ENCODE measurements at regions of chr5 and their contacts with region 1.

Region 1: DNA sequence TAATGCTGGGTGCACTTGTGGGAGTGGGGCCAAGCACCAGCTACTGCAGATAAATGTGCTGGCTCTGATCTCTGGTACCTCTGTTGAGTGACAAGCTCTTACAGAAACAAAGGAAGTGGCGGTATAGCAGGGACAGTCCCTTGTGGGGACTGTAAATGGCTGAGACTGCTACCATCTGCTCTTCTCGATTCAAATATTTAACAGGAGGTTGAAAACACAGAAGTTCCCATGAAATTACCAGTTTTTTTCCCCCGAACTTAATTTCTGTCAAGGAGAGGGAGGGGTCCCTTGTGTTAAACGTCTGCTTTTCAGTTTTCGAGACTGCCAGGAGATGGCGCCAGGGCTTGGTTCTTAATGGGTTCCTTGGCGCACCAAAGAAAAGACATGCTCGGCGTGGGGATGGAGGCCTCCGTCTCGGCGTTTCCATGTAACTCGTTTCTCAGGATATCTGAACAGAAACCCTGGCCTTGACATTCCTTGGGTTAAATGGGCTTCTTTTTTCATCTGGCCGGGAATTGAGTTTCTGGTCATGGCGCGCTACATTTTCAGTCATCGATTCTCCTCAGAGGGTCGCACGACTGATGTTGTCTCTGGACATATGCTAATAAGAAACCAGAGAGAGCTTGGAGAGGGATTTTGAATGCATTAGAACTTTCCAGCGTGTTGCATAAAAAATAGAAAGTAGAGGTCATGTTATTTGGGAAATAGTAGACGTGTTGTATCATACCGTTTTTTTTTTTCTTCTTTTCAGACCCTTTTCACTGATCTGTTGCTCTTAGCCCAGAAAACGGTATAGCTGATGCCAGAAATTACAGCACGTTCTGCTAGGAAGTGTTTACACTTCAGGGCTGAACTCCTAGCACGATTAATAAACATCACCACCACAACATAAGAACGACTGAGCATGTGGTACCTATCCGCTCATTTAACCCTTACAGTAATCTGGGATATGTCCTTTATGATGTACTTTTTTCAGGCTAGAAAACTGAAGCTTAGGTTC is 64.0 kb downstream of the CARTPT start:
- DNase-seq: peak; percentile 89 to 94
- ATAC-seq: peak; percentile 89
- H3K4me3 ChIP-seq: peak overlapping the region in 1 of 2 donors; percentile 80
- H3K27ac ChIP-seq: peak overlapping the region; percentile 91 to 97
- H3K4me1 ChIP-seq: peaks cover 3 to 9% of the 10 kb centered on the region in 2 donors
- H3K27me3 ChIP-seq: no peaks in the 10 kb centered on the region

Region 2: GRCh38 chr5:71679714-71680113 is 103.4 kb before region 1 on chr5:
- intact Hi-C with region 1: no loop called
- DNase-seq: no peak
- ATAC-seq: no peak
- H3K4me3 ChIP-seq: no peak overlapping the region
- H3K27ac ChIP-seq: no peak overlapping the region
- H3K4me1 ChIP-seq: no peaks in the 10 kb centered on the region
- H3K27me3 ChIP-seq: no peaks in the 10 kb centered on the region

Region 3: DNA sequence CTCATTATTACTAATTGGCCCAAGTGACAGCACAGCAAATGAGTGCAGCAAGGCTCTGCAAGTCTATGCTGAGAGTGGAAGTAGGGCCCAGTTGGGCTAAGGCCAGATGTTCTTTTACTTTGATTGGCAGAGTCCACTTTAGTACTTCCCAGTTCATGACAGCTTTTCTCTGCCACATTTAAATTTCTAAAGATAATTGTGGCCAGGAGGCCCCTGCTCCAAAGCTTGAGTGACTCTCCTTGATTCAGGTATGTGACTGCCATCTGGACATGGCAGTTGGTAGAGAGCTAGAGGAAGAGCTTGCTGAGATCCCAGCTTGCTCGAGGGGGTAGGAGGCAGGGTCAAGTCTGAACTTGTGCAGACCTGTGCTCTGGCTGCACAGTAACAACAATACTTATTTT is 90.1 kb after region 1 on chr5:
- intact Hi-C with region 1: loop called in 1 of 2 experiments (anchors 10 kb)
- DNase-seq: no peak
- ATAC-seq: no peak
- H3K4me3 ChIP-seq: no peak overlapping the region
- H3K27ac ChIP-seq: no peak overlapping the region
- H3K4me1 ChIP-seq: no peaks in the 10 kb centered on the region
- H3K27me3 ChIP-seq: no peaks in the 10 kb centered on the region

Region 4: GRCh38 chr5:71932655-71933338 is 149.7 kb after region 1 on chr5:
- intact Hi-C with region 1: loop called (anchors 2 to 5 kb)
- DNase-seq: peak; percentile 92 to 93
- ATAC-seq: peak; percentile 86
- H3K4me3 ChIP-seq: no peak overlapping the region
- H3K27ac ChIP-seq: peak overlapping the region; percentile 91 to 99
- H3K4me1 ChIP-seq: no peaks in the 10 kb centered on the region
- H3K27me3 ChIP-seq: no peaks in the 10 kb centered on the region

Region 5: GRCh38 chr5:72018146-72018803 is 235.2 kb after region 1 on chr5:
- intact Hi-C with region 1: loop called (anchors 2 to 5 kb)
- DNase-seq: peak in 1 of 2 donors; percentile 59
- ATAC-seq: peak; percentile 56
- H3K4me3 ChIP-seq: no peak overlapping the region
- H3K27ac ChIP-seq: no peak overlapping the region
- H3K4me1 ChIP-seq: no peaks in the 10 kb centered on the region
- H3K27me3 ChIP-seq: no peaks in the 10 kb centered on the region

Region 6: DNA sequence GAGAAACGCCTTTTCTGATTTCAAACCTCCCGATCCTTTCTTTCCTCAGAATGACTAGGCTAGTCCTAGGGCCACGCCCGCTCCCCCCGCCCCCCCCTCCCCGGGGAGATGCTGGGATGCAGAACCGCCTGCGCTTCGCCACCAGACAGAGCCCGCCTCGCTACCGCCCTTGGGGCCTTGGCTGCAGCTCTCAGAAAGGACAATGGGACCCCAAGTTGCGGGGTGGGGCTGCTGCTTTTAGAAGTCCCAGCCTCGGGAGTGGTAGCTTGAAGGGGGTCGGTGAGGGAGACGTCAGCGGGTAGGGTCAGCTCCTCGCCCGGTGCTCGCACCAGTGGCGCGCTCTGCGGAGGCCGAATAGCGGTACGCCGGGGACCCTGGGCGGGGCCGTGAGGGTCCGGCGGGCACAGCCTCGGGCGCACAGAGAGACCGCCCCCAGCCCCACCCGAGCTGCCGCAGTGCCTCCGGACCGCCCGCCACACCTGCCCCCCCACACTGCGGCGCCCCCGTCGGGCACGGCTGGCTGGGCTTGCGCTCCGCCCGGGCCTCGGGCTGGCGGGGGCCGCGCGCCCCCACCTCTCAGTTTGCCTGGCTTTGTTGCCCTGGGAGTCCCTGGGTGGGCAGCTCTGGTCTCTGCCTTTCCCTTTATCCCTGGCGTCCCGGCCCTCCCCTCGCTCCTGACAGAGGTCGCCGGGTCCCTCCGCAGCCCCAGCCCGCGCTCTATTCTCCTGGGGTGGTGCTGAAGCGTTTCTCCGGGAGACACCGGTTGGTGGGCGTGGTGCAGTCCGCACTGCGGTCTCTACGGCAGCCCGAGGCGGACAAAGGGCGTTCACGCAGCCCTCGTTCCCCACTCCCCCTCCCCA is 325.4 kb after region 1 on chr5:
- intact Hi-C with region 1: loop called (anchors 2 to 5 kb)
- DNase-seq: peak; percentile 90 to 93
- ATAC-seq: peak; percentile 83
- H3K4me3 ChIP-seq: peak overlapping the region; percentile 88 to 96
- H3K27ac ChIP-seq: peak overlapping the region; percentile 93 to 96
- H3K4me1 ChIP-seq: peaks cover 0 to 2% of the 10 kb centered on the region in 2 donors
- H3K27me3 ChIP-seq: no peaks in the 10 kb centered on the region